Heart right ventricle (tissue), 16 donors: ENCODE measurements at regions of chr19 and their contacts with region 1.

Region 1: DNA sequence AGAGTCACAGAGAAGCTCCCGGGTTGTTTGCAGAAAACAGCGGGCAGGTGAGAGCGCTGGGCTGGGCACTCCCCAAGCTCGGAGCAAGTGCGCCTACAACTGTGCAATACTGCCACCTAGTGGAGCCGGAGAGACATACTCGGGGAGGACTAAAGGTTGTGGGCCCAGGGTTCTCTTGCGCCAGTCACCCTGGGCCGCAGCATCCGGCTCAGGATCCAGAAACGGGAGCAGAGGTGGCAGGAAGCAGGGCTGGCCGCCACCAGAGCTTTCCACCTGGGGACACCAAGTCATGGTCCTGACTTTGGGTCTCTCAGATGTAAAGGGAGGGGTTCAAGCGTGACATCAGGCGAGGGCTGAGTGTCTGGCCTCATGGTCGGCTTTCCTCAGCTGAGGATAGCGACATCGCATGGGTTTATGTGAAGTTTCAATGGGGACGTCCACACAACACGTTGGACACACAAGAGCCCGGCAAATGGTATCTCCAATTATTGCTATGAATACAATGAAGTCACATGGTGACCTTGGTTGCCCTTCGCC is 11.2 kb upstream of the KLK4 start:
- DNase-seq: peak; percentile 50 to 69
- ATAC-seq: peak; percentile 71 to 93 (median 88)
- H3K4me3 ChIP-seq: no peak overlapping the region
- H3K27ac ChIP-seq: no peak overlapping the region
- H3K4me1 ChIP-seq: peaks cover 0 to 10% (median 0%) of the 10 kb centered on the region in 9 donors
- H3K27me3 ChIP-seq: peaks cover 0 to 81% (median 56%) of the 10 kb centered on the region in 7 donors
- CTCF ChIP-seq: peak; percentile 64 to 88 (median 79)

Region 2: DNA sequence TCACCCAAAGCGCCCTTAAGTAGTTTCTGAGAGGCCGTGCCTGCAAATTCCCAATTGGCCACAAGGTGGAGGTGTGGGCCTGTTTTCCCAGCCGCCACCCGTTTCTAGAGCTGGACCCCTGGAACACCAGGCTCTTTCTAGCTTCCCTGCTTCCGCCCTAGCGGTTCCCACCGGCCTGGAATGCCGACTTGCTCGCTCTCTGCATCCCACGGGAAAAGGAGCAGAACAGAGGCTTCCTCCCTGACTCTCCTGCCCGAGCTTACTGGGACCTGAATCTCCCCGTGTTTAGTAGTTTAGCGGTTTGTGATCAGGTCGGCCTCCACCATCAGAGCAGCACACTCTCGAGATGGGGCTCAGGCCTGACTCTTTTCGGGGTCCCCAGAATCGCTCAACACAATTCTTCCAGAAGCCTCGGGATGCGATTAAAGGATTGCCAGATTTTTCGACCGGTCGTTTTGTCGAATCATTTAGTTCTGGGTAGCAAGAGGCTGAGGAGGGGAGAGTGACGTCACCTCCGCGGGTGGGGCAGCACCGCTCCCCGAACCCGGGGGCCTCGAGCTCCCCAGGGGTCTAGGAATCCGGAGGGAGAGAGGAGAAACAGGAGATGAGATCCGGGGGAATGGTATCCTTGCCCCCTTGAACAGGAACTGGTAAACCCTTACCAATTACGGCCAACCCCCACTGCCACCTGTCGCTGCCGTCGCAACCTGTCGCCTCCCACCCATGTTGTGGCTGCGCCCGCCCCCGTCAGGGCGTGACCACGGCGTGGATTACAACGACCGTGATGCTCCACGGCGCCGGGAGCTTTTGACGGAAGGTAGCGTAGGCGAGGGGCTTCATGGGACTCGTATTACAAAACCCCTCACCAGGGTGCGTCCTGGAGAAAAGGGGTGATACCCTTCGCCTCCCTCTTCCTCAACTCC is 564.9 kb before region 1 on chr19:
- intact Hi-C with region 1: loop called in 1 of 10 experiments (anchors 5 kb)
- DNase-seq: peak; percentile 75 to 79
- ATAC-seq: peak; percentile 77 to 89 (median 80)
- H3K4me3 ChIP-seq: peak overlapping the region; percentile 35 to 67 (median 58)
- H3K27ac ChIP-seq: peak overlapping the region in 9 of 10 donors; percentile 77 to 88 (median 84)
- H3K4me1 ChIP-seq: peaks cover 0 to 16% (median 8%) of the 10 kb centered on the region in 9 donors
- H3K27me3 ChIP-seq: no peaks in the 10 kb centered on the region
- CTCF ChIP-seq: peak; percentile 83 to 94 (median 87)

Region 3: GRCh38 chr19:50537762-50538230 is 384.6 kb before region 1 on chr19:
- intact Hi-C with region 1: loop called in 1 of 10 experiments (anchors 10 kb)
- DNase-seq: peak; percentile 69 to 83
- ATAC-seq: peak; percentile 55 to 89 (median 79)
- H3K4me3 ChIP-seq: no peak overlapping the region
- H3K27ac ChIP-seq: no peak overlapping the region
- H3K4me1 ChIP-seq: peaks cover 0 to 5% (median 0%) of the 10 kb centered on the region in 9 donors
- H3K27me3 ChIP-seq: peaks cover 0 to 9% (median 0%) of the 10 kb centered on the region in 7 donors
- CTCF ChIP-seq: peak; percentile 57 to 83 (median 78)

Region 4: DNA sequence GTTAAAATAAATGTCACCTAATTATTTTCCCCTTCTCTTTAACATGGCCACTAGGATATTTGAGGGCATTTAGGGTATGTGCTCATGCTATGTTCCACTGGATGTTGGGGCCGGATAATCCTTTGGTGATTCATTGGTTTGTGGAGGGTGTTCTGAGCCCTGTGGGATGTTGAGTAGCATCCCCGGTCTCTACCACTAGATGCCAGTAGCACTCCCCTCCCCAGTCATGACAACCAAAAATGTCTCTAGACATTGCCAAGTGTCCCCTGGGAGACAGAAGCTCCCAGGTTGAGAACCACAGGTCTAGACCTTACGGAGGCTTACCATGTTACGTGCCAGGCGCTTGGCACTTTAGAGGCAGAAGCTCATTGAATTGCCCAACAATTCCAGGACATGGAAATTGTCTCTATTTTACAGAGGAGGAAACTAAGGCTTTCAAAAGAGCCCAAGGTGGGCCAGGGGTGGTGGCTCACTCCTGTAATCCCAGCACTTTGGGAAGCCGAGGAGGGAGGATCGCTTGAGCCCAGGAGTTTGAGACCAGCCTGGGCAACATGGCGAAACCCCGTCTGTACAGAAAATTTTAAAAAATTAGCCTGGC is 216.9 kb before region 1 on chr19:
- intact Hi-C with region 1: loop called in 1 of 10 experiments (anchors 5 kb)
- DNase-seq: no peak
- ATAC-seq: peak in 3 of 8 donors; percentile 42 to 58 (median 44)
- H3K4me3 ChIP-seq: no peak overlapping the region
- H3K27ac ChIP-seq: no peak overlapping the region
- H3K4me1 ChIP-seq: no peaks in the 10 kb centered on the region
- H3K27me3 ChIP-seq: peaks cover 5 to 72% (median 46%) of the 10 kb centered on the region in 7 donors
- CTCF ChIP-seq: peak; percentile 13 to 70 (median 51)

Region 5: DNA sequence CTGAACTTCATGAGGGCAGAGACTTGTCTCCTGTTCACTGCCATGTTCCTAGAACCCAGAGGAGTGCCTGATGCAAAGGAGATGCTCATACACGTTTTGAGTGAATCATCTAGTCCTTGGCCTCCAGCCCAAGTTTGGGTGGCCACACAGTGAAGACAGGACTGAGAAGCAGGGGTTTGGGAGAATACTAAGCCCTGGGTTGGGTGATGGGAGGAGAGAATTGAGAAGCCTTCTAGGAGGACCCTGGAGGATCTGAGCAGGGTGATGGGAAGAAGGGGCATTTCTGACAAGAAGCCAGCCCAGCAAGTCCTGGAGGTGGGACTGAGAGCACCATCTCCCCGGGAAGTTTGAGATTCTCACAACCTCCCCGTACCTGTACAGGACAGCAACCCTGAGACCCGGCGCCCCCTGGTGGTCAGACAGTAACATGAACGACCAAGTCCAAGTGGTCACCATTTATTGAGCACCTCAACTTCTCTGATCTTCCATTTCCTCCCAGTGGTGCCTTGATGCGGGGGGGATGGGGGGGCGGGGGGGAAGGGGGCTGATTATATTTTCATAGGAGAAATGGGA is 174.9 kb after region 1 on chr19:
- intact Hi-C with region 1: loop called in 2 of 10 experiments (anchors 5 to 10 kb)
- DNase-seq: peak; percentile 62 to 77
- ATAC-seq: peak in 7 of 8 donors; percentile 32 to 77 (median 63)
- H3K4me3 ChIP-seq: no peak overlapping the region
- H3K27ac ChIP-seq: no peak overlapping the region
- H3K4me1 ChIP-seq: peaks cover 0 to 30% (median 10%) of the 10 kb centered on the region in 9 donors
- H3K27me3 ChIP-seq: no peaks in the 10 kb centered on the region
- CTCF ChIP-seq: peak; percentile 23 to 69 (median 61)

Region 6: GRCh38 chr19:51179256-51179655 is 256.9 kb after region 1 on chr19:
- intact Hi-C with region 1: loop called in 1 of 10 experiments (anchors 10 kb)
- DNase-seq: no peak
- ATAC-seq: peak in 5 of 8 donors; percentile 21 to 61 (median 48)
- H3K4me3 ChIP-seq: no peak overlapping the region
- H3K27ac ChIP-seq: peak overlapping the region in 2 of 10 donors; percentile 21 to 31
- H3K4me1 ChIP-seq: peaks cover 0 to 5% (median 0%) of the 10 kb centered on the region in 9 donors
- H3K27me3 ChIP-seq: peaks cover 0 to 37% (median 28%) of the 10 kb centered on the region in 7 donors
- CTCF ChIP-seq: no peak

Region 7: GRCh38 chr19:51203916-51204315 is 281.5 kb after region 1 on chr19:
- intact Hi-C with region 1: no loop called
- DNase-seq: no peak
- ATAC-seq: no peak
- H3K4me3 ChIP-seq: no peak overlapping the region
- H3K27ac ChIP-seq: no peak overlapping the region
- H3K4me1 ChIP-seq: peaks cover 0 to 17% (median 0%) of the 10 kb centered on the region in 9 donors
- H3K27me3 ChIP-seq: peaks cover 0 to 35% (median 25%) of the 10 kb centered on the region in 7 donors
- CTCF ChIP-seq: no peak